ENCODE measurements at regions of chr5 and their contacts with region 1.

Region 1: DNA sequence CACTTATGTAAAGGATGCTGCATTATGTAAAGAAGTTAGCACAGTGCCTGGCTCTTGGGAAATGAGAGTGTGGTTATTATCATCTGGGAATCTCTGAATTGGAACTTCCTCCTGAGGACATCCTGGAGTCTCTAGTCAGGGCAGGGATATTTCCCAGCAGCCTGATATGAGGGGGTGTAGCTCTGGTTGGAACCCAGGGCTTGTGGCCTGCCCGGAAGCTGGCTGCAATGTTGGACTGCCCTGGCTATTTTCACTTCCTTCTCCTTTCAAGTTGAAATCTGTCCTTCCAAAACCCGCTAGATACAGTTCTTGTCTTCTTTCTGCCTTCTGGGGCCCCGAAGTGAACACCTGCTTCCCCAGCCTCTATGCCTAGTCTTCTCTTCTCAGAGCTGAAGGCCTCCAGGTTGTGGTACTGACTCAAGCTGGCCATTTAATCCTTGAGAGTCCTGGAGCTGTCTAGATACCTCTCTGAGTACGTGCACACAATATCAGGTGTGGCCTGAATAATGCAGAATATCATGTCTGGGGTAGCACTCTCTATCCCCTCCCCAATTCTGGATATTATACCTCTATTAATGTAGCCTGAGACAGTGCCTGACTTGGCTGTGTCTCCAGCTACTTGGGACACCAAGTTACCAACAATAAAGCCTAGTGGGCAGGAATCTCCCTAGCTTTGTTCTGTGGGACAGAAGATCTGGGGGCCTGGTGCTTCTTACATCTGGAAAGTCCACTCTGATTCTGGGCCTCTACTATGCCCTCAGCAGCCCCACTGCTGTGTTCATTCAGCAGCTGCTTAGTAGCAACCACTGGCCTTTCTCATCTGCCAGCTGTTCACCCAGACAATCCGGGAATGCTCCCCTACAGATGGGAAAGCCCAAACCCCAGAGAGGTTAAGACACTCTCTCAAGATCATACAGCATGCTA is 45.0 kb downstream of the SLC6A7 start:
- DNase-seq: no peak
- H3K4me3 ChIP-seq: no peak overlapping the region
- H3K27ac ChIP-seq: no peak overlapping the region
- H3K4me1 ChIP-seq: no peaks in the 10 kb centered on the region
- H3K27me3 ChIP-seq: no peaks in the 10 kb centered on the region
- CTCF ChIP-seq: no peak

Region 2: GRCh38 chr5:150000256-150000989 is 234.4 kb before region 1 on chr5 and contains the starts of genes HMGXB3 and TIGD6:
- CTCF ChIA-PET with region 1: no interaction called
- dilution Hi-C with region 1: no loop called
- in situ Hi-C with region 1: no loop called
- intact Hi-C with region 1: no loop called
- DNase-seq: peak; percentile 93
- H3K4me3 ChIP-seq: peak within 1 kb of the TSS; percentile 60 to 92 (median 86)
- H3K27ac ChIP-seq: peak within 1 kb of the TSS; percentile 86
- H3K4me1 ChIP-seq: peaks cover 16% of the 10 kb centered on the region
- H3K27me3 ChIP-seq: no peaks in the 10 kb centered on the region
- CTCF ChIP-seq: peak in 1 of 2 donors; percentile 8
- total RNA-seq, gene HMGXB3: 46.7 to 60.0 TPM
- total RNA-seq, gene TIGD6: 5.8 to 6.0 TPM

Region 3: GRCh38 chr5:150129813-150130492 is 104.9 kb before region 1 on chr5:
- CTCF ChIA-PET with region 1: no interaction called
- dilution Hi-C with region 1: loop called (anchors 5 kb)
- in situ Hi-C with region 1: no loop called
- intact Hi-C with region 1: no loop called
- DNase-seq: peak; percentile 59
- H3K4me3 ChIP-seq: peak overlapping the region in 1 of 3 experiments; percentile 35
- H3K27ac ChIP-seq: no peak overlapping the region
- H3K4me1 ChIP-seq: peaks cover 17% of the 10 kb centered on the region
- H3K27me3 ChIP-seq: no peaks in the 10 kb centered on the region
- CTCF ChIP-seq: peak; percentile 95 to 98

Region 4: DNA sequence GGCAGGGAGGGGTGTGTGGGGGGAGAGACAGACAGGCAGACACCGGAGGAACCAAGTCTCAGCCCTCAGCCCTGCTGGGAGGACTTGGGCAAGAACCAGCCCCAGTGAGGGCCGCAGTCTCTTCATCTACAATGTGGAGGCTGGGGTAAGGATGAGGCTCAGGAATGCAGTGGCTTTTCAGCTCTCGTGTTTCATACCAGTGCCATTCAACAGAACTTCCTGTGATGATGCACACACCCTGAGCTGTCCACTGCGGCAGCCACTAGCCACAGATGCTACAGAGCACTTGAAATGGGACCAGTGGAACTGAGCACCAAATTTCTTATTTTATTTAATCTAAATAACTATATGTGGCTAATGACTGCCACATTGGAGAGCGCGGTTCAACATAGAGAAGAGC is 44.1 kb after region 1 on chr5:
- CTCF ChIA-PET with region 1: no interaction called
- dilution Hi-C with region 1: loop called (anchors 5 kb)
- in situ Hi-C with region 1: no loop called
- intact Hi-C with region 1: no loop called
- DNase-seq: peak; percentile 72
- H3K4me3 ChIP-seq: no peak overlapping the region
- H3K27ac ChIP-seq: no peak overlapping the region
- H3K4me1 ChIP-seq: peaks cover 18% of the 10 kb centered on the region
- H3K27me3 ChIP-seq: no peaks in the 10 kb centered on the region
- CTCF ChIP-seq: no peak

Region 5: DNA sequence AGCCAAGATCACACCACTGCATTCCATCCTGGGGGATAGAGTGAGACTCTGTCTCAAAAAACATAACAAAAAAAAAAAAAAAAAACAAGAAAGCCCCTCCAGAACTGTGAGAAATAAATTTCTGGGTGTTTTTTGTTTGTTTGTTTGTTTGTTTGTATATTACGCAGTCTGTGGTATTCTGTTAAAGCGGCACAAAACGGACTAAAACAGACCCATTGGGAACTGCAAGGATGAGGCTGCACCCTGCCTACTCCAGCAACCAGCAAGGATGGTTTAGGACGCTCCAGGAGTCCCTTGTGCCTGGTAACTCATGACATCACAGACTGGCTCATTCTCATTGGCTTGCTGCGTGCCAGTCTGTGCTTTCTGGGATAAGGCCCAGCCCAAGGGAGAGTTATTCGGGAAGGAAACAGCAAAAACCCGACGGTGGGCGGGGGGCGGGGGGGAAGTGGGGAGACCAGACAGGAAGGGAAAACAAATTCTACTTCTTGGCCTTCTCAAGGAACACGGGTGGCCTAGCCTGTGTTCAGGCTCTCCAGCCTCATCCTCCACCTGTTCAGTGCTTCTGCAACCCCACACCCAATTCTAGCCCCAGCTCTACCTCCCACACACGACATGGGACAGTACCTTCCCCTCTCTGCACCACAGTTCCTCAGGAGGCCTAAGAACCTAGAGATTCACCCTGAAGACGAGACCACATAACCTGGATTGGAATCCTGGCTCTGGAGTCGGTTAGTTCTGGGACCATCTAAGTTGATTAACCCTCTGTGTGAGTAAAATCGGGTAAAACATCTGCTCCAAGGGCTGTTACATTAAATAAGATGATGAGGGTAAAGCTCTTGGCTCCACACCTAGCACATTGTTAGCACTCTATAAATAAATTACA is 175.0 kb after region 1 on chr5:
- CTCF ChIA-PET with region 1: no interaction called
- dilution Hi-C with region 1: loop called (anchors 10 kb)
- in situ Hi-C with region 1: no loop called
- intact Hi-C with region 1: no loop called
- DNase-seq: peak; percentile 80
- H3K4me3 ChIP-seq: no peak overlapping the region
- H3K27ac ChIP-seq: no peak overlapping the region
- H3K4me1 ChIP-seq: no peaks in the 10 kb centered on the region
- H3K27me3 ChIP-seq: no peaks in the 10 kb centered on the region
- CTCF ChIP-seq: no peak

Region 6: GRCh38 chr5:150523472-150524350 is 288.9 kb after region 1 on chr5:
- CTCF ChIA-PET with region 1: no interaction called
- dilution Hi-C with region 1: loop called (anchors 10 kb)
- in situ Hi-C with region 1: no loop called
- intact Hi-C with region 1: no loop called
- DNase-seq: peak; percentile 39
- H3K4me3 ChIP-seq: no peak overlapping the region
- H3K27ac ChIP-seq: no peak overlapping the region
- H3K4me1 ChIP-seq: peaks cover 42% of the 10 kb centered on the region
- H3K27me3 ChIP-seq: no peaks in the 10 kb centered on the region
- CTCF ChIP-seq: peak; percentile 44 to 59

Measured in mammary epithelial cell (primary cell).